ENCODE measurements at regions of chr11 and their contacts with region 1.

Region 1: GRCh38 chr11:61061081-61061826 is 41.0 kb upstream of the CD5 start:
- DNase-seq: peak; percentile 94
- ATAC-seq: peak; percentile 80
- H3K4me3 Mint-ChIP-seq: peak overlapping the region; percentile 62
- H3K27ac Mint-ChIP-seq: peak overlapping the region; percentile 91
- H3K4me1 Mint-ChIP-seq: peaks cover 72% of the 10 kb centered on the region
- H3K27me3 Mint-ChIP-seq: no peaks in the 10 kb centered on the region
- CTCF ChIP-seq: no peak

Region 2: DNA sequence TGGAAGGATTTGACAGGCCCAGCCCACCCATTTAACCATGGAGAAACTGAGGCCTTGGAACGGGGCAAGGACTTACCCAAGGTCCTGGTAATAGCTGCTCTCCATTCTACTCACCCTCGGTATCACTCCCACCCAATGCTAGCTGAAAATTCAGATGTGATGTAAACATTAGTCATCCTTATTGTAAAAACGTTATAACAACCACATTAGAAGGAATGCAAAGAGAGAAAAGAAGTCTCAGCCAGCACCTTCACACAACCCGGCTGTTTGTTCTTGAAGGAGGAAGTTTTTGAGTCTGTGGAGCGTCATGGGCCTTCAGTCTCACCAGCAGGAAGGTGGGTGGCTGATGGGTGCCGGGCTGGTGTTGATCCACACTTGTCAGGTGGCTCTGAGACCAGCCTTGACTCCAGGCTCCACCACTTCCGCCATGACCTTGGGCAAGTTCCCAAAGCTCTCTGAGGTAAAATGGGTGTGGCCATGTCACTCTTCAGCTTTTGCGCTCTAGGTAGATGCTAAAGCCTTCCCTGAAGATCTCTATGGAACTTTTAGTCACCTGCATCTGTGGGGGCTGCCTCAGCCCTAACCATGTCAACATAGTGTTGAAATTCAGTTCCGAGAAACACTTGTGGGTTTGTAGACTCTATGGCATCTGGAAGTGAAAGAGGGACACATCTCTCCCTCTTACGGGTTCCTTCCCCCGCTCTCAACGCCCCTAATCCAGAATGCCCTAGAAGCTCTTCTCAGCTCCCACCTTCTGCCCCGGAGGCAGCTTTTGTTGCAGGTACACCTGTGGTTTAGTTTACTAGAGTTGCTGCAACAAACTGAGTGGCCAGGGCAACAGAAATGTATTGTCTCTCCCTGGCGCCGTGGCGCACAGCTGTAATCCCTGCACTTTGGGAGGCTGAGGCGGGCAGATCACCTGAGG is 75.0 kb before region 1 on chr11:
- CTCF ChIA-PET with region 1: no interaction called
- POLR2A ChIA-PET with region 1: interaction called, 10 read pairs
- intact Hi-C with region 1: loop called (anchors 2 kb)
- DNase-seq: peak; percentile 98
- ATAC-seq: peak; percentile 84
- H3K4me3 Mint-ChIP-seq: peak overlapping the region; percentile 64
- H3K27ac Mint-ChIP-seq: peak overlapping the region; percentile 98
- H3K4me1 Mint-ChIP-seq: peaks cover 94% of the 10 kb centered on the region
- H3K27me3 Mint-ChIP-seq: no peaks in the 10 kb centered on the region
- CTCF ChIP-seq: no peak

Region 3: DNA sequence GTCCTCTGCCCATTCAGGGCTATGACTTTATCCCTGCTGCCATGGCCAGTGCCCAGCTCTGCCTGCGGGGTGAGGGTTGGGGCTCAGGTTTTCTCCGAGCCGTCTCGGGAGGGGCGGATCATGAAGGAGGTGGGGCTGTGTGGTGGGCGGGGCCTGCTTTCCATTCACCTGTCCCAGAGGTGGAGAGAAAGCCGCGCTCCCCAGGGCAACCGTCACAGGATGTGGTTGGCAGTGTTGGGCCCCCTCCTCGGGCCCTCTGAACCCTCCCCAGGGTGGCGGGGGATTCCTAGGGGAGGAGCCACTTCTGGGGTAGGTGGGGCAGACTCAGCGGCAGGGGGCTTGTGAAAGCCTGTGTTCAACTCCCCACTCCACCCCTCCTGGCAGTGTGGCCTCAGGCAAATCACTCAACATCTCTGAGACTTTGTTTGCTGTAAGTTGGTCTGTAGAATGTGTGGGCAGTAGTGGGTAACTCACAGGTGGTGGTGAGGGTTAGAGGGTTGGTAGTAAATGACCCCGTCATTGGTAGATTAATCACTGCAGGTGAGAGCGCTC is 39.5 kb before region 1 on chr11:
- CTCF ChIA-PET with region 1: interaction called, 3 read pairs
- POLR2A ChIA-PET with region 1: interaction called, 12 read pairs
- intact Hi-C with region 1: loop called (anchors 5 kb)
- DNase-seq: peak; percentile 92
- ATAC-seq: peak; percentile 63
- H3K4me3 Mint-ChIP-seq: peak overlapping the region; percentile 64
- H3K27ac Mint-ChIP-seq: peak overlapping the region; percentile 88
- H3K4me1 Mint-ChIP-seq: peaks cover 81% of the 10 kb centered on the region
- H3K27me3 Mint-ChIP-seq: no peaks in the 10 kb centered on the region
- CTCF ChIP-seq: no peak

Region 4: DNA sequence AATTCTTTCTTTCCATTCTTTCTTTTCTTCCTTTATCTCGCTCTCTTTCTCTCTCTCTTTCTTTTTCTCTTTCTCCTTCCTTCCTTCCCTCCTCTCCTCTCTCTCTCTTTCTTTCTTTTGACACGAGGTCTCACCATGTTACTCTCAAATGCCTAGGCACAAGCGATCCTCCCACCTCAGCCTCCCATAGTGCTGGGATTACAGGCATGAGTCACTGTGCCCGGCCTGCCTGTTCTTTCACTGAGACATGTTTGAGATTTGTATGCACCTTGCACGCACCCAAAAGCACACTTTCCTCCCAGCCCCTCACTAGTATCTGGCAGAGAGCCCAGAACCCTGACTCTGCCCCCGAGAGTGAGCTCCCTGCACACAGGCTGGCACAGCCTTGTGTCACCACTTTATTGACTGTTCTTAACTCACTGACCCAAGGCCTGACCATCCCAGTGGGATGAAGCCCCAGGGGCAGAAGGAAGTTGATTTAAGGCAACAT is 32.9 kb before region 1 on chr11:
- CTCF ChIA-PET with region 1: interaction called, 4 read pairs
- POLR2A ChIA-PET with region 1: interaction called, 12 read pairs
- intact Hi-C with region 1: loop called (anchors 5 kb)
- DNase-seq: peak; percentile 88
- ATAC-seq: peak; percentile 31
- H3K4me3 Mint-ChIP-seq: peak overlapping the region; percentile 79
- H3K27ac Mint-ChIP-seq: peak overlapping the region; percentile 96
- H3K4me1 Mint-ChIP-seq: peaks cover 75% of the 10 kb centered on the region
- H3K27me3 Mint-ChIP-seq: no peaks in the 10 kb centered on the region
- CTCF ChIP-seq: no peak

Region 5: GRCh38 chr11:61041755-61042518 is 19.3 kb before region 1 on chr11:
- CTCF ChIA-PET with region 1: interaction called, 10 read pairs
- POLR2A ChIA-PET with region 1: interaction called, 15 read pairs
- intact Hi-C with region 1: no loop called
- DNase-seq: peak; percentile 90
- ATAC-seq: peak; percentile 97
- H3K4me3 Mint-ChIP-seq: peak overlapping the region; percentile 58
- H3K27ac Mint-ChIP-seq: peak overlapping the region; percentile 93
- H3K4me1 Mint-ChIP-seq: peaks cover 57% of the 10 kb centered on the region
- H3K27me3 Mint-ChIP-seq: no peaks in the 10 kb centered on the region
- CTCF ChIP-seq: no peak

Region 6: DNA sequence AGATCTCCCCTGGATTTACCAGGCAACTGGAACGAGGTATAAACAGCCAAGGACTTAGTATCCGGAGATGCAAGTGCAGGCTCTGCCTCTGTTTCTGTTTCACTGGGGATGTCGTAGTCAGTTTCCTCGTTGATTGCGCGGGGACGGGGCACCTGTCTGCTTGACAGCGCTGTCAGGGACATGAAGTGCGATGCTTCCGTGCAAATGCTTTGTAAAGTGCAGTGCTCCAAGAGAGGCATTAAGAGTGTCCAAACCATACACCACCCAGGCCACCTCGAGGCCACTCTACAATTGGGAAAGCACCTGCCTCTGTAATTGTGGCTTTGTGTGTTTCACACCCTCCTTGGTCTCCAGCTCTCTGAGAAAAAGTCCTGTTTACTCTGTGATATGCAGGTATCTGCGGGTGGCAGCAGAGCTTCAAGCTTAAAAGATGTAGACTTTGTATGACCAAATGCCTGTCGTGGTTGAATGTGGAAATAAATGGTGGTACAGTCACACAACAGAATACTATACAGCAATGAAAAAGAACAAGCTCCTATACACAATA is 22.4 kb after region 1 on chr11:
- CTCF ChIA-PET with region 1: interaction called, 3 read pairs
- POLR2A ChIA-PET with region 1: interaction called, 27 read pairs
- intact Hi-C with region 1: no loop called
- DNase-seq: peak; percentile 83
- ATAC-seq: peak; percentile 70
- H3K4me3 Mint-ChIP-seq: peak overlapping the region; percentile 78
- H3K27ac Mint-ChIP-seq: peak overlapping the region; percentile 88
- H3K4me1 Mint-ChIP-seq: peaks cover 65% of the 10 kb centered on the region
- H3K27me3 Mint-ChIP-seq: no peaks in the 10 kb centered on the region
- CTCF ChIP-seq: no peak

Region 7: DNA sequence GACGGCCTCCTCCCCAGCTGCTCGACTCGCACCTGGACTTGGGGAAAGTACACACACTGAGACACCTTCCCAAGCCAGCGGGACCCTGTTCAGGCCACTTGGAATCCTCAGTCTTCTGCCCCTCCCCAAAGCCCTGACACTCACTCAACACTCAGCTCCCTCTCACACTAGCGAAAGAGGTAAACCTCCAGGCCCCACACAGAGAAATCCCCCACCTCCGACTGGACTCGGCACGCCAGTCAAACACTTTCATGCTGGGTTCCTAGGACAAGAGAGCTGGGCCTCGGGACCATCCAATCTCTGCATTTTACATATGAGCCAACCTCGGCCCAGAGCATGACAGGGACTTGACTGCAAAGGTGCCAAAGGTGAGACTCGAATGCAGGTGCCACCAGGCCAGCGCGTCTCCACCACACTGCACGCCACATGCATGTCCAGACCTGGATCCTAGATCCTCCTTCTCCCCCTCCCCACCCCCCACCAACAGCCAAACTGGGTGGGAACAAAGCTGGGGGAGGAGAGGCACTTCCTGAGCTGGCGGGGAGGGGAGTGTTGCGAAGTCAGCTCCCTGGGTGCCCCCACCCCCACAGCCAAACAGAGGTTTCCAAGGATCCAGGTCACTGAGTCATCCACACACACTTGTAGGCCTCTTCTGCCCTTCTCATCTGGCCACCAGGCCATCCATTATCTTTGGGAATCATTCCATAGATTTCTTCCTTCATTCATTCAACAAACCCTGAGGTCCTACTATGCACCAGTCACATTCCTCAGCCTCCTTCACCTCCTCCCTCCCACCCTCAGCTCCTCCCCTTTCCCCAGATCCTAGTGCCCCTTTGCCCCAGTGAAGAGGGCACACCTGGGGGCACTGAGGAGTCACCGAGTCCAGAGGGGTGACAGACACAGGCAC is 30.4 kb after region 1 on chr11:
- CTCF ChIA-PET with region 1: no interaction called
- POLR2A ChIA-PET with region 1: interaction called, 16 read pairs
- intact Hi-C with region 1: no loop called
- DNase-seq: peak; percentile 79
- ATAC-seq: peak; percentile 68
- H3K4me3 Mint-ChIP-seq: peak overlapping the region; percentile 91
- H3K27ac Mint-ChIP-seq: peak overlapping the region; percentile 99
- H3K4me1 Mint-ChIP-seq: peaks cover 67% of the 10 kb centered on the region
- H3K27me3 Mint-ChIP-seq: no peaks in the 10 kb centered on the region
- CTCF ChIP-seq: no peak